Activated CD4-positive, alpha-beta T cell treated with anti-CD3 and anti-CD28 coated beads, Interleukin-2, amount 10 ng/mL, durations not matched to agents 24 days and 14 days (primary cell): ENCODE measurements at regions of chr21 and their contacts with region 1.

Region 1: GRCh38 chr21:34986561-34987500 is 62.3 kb downstream of the RUNX1 start:
- DNase-seq: peak; percentile 90
- H3K4me3 Mint-ChIP-seq: peak overlapping the region; percentile 86
- H3K27ac Mint-ChIP-seq: peak overlapping the region; percentile 97
- H3K4me1 Mint-ChIP-seq: peaks cover 85% of the 10 kb centered on the region
- H3K27me3 Mint-ChIP-seq: no peaks in the 10 kb centered on the region

Region 2: DNA sequence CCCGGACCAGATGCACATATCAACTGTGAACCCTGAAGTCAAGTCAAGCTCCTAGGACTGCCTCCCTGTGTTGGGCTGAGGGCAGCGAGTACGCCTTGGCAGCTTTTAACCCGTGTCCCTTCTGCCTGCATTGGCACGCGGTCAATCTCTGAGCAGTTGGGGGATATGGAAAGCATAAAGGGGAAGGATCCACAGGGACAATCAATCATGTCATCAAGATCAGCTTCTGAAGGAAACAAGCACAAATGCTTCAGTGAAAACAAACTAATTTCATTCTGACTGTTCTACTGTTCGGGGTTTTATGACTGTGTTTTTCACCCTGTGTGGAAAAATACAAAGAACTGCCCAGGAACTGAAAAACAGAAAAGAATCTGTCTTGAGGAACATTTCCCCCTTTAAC is 43.9 kb before region 1 on chr21:
- intact Hi-C with region 1: loop called (anchors 1 kb)
- DNase-seq: no peak
- H3K4me3 Mint-ChIP-seq: peak overlapping the region; percentile 47
- H3K27ac Mint-ChIP-seq: peak overlapping the region; percentile 94
- H3K4me1 Mint-ChIP-seq: peaks cover 75% of the 10 kb centered on the region
- H3K27me3 Mint-ChIP-seq: no peaks in the 10 kb centered on the region

Region 3: DNA sequence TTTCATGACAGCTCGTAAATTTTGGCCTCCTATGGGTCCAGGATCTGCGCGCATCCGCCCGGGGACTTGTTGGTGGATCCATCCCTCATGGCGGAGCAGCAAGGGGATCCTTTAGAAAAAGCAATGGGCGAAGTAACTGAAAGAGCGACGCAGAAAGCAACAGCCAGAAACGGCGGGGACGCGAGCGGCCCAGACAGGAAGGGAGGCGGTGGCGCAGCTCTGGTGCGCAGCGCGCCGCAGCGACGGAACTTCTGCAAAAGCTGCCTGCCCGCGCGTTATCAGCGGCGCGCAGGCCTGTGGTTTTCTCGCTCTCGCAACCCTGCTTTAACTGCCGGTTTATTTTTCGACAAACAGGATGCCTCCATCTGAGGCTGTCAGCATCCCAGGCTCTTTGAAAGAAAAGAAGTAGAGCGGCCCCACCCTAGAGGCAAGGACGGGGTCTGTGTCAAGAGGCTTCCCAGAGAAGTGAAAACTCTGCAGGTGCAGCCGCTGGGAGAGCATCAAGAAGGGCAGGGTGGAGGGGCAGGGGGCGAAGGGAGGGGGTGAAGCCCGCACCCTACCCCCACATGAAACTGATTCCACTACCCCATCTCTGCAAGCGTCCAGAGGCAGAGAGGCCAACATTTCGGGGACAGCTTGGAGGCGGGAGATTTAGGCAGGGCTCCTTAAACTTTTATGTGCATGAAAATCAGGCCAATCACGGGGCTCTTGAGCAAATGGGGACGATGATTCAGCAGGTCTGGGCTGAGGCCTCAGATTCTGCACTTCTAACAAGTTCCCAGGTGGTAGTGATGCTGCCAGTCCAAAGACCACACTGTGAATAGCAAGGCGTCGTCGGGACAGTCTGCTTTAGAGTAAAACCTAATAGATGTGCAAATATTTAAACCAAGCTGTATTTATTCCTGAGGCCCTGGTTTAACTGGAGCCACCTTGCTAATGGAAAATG is 40.1 kb after region 1 on chr21:
- intact Hi-C with region 1: loop called (anchors 1 kb)
- DNase-seq: peak; percentile 96
- H3K4me3 Mint-ChIP-seq: peak overlapping the region; percentile 81
- H3K27ac Mint-ChIP-seq: peak overlapping the region; percentile 99
- H3K4me1 Mint-ChIP-seq: peaks cover 73% of the 10 kb centered on the region
- H3K27me3 Mint-ChIP-seq: no peaks in the 10 kb centered on the region

Region 4: GRCh38 chr21:35095859-35096291 is 109.0 kb after region 1 on chr21:
- intact Hi-C with region 1: loop called (anchors 2 kb)
- DNase-seq: no peak
- H3K4me3 Mint-ChIP-seq: no peak overlapping the region
- H3K27ac Mint-ChIP-seq: peak overlapping the region; percentile 92
- H3K4me1 Mint-ChIP-seq: peaks cover 29% of the 10 kb centered on the region
- H3K27me3 Mint-ChIP-seq: no peaks in the 10 kb centered on the region

Region 5: DNA sequence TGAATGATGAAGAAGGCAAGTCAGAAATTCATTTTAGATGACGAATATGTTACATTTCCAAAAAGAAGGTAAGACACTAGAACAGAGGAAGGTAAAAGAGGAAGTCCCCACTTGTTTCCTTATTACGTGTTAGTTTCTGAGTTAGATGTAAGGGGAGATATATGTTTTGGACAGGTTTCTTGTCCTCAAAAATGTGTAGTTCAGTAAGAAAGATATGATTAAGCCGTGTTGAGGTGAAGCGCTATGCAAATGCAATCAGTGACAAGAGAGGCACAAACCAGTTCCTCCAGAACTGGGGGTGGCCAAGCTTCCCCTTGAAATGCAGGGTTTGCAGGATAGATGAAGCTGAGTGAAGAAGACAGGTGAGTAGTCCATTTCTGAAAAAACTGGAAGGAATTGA is 355.6 kb after region 1 on chr21:
- intact Hi-C with region 1: loop called (anchors 5 kb)
- DNase-seq: no peak
- H3K4me3 Mint-ChIP-seq: peak overlapping the region; percentile 53
- H3K27ac Mint-ChIP-seq: peak overlapping the region; percentile 88
- H3K4me1 Mint-ChIP-seq: peaks cover 41% of the 10 kb centered on the region
- H3K27me3 Mint-ChIP-seq: no peaks in the 10 kb centered on the region

Region 6: DNA sequence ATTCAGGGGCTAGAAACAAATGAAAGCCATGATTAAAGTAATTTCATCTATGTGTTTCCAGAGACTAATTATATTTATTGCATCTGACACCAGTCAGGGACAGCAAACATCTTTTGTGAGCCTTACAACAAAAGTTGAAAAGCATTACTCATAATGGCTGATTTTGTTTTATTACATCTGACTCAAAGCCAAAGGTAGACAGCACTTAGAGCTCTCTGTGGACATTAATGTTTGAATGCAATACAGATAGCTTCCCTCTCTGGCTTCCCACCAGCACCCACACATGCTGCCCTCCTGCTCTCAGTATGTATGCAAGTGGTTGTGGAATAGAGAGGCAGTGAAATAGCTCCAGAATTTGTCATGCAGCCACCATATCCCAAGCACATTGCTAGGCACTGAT is 874.8 kb after region 1 on chr21:
- intact Hi-C with region 1: no loop called
- DNase-seq: no peak
- H3K4me3 Mint-ChIP-seq: no peak overlapping the region
- H3K27ac Mint-ChIP-seq: no peak overlapping the region
- H3K4me1 Mint-ChIP-seq: no peaks in the 10 kb centered on the region
- H3K27me3 Mint-ChIP-seq: peaks cover 13% of the 10 kb centered on the region